Mammary epithelial cell (primary cell): ENCODE measurements at regions of chr2 and their contacts with region 1.

Region 1: GRCh38 chr2:189466660-189467059 is 25.4 kb downstream of the WDR75 start:
- DNase-seq: no peak
- H3K4me3 ChIP-seq: no peak overlapping the region
- H3K27ac ChIP-seq: no peak overlapping the region
- H3K4me1 ChIP-seq: no peaks in the 10 kb centered on the region
- H3K27me3 ChIP-seq: no peaks in the 10 kb centered on the region
- CTCF ChIP-seq: peak; percentile 23 to 52

Region 2: GRCh38 chr2:189393440-189394111 is 73.1 kb before region 1 on chr2:
- CTCF ChIA-PET with region 1: no interaction called
- dilution Hi-C with region 1: no loop called
- in situ Hi-C with region 1: no loop called
- intact Hi-C with region 1: no loop called
- DNase-seq: peak; percentile 95
- H3K4me3 ChIP-seq: peak overlapping the region in 1 of 3 experiments; percentile 18
- H3K27ac ChIP-seq: peak overlapping the region; percentile 89
- H3K4me1 ChIP-seq: peaks cover 16% of the 10 kb centered on the region
- H3K27me3 ChIP-seq: no peaks in the 10 kb centered on the region
- CTCF ChIP-seq: no peak

Region 3: DNA sequence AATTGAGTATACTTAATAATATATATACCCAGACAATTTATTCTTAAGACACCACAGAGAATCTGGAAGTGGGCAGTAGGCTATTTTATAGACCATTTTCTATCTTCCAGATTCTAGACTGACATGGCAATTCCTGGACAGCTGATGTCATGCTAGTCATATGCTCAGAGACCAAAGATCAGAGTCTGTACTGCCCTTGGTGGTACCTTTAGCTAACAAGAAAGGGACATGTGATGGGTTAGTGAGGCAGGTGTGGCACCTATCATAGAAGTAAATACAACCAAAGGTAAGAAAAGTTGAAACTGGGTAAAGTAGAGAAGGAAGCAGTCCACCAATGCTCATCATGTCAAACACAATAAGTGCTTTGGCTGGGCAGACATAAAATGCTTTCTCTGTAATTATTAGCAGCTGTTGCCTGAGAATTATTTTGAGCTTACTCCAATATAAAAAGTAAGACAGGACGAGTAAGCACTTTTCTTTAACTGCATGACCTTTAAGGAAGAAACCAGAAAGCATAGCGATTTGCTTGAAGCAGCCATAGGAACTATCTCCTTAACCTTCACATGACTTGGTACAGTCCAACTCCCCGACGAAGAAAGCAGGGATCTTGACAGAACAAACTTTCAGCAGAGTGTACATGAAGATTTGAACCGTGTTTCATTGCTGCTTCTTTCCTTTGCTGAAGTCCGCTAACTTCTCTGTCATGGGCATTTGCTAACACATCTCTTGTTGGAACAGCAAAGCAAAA is 66.8 kb after region 1 on chr2:
- CTCF ChIA-PET with region 1: no interaction called
- dilution Hi-C with region 1: no loop called
- in situ Hi-C with region 1: no loop called
- intact Hi-C with region 1: no loop called
- DNase-seq: no peak
- H3K4me3 ChIP-seq: no peak overlapping the region
- H3K27ac ChIP-seq: no peak overlapping the region
- H3K4me1 ChIP-seq: no peaks in the 10 kb centered on the region
- H3K27me3 ChIP-seq: no peaks in the 10 kb centered on the region
- CTCF ChIP-seq: no peak

Region 4: GRCh38 chr2:189633392-189633811 is 166.7 kb after region 1 on chr2:
- CTCF ChIA-PET with region 1: no interaction called
- dilution Hi-C with region 1: no loop called
- in situ Hi-C with region 1: no loop called
- intact Hi-C with region 1: loop called (anchors 2 kb)
- DNase-seq: no peak
- H3K4me3 ChIP-seq: no peak overlapping the region
- H3K27ac ChIP-seq: no peak overlapping the region
- H3K4me1 ChIP-seq: no peaks in the 10 kb centered on the region
- H3K27me3 ChIP-seq: no peaks in the 10 kb centered on the region
- CTCF ChIP-seq: peak; percentile 32 to 46